CD4-positive, alpha-beta T cell (primary cell): ENCODE measurements at regions of chr6 and their contacts with region 1.

Region 1: DNA sequence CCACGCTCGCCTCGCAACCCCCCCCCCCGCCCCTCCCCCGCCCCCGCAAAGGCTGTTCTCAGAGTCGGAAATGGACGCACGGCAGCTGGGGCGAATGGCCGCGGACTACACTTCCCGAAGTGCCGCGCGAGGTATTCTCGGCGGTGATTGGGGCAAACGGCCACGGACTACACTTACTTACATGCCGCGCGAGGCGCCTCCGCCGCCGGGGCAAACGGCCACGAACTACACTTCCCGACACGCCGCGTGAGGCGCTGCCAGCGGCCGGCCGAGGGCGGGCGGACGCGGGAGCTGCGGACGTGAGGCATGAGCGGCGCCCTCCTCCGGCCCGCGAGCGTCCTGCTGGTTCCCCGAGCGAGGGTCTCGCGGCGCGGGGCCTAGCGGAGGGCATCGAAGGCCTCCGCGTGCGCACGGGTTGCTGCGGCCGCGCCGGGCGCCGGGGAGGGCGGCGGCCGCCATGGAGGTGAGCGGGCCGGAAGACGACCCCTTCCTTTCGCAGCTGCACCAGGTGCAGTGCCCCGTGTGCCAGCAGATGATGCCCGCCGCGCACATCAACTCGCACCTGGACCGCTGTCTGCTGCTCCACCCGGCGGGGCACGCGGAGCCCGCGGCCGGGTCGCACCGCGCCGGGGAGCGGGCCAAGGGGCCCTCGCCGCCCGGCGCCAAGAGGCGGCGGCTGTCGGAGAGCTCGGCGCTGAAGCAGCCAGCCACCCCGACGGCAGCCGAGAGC is at the start of gene WRNIP1:
- DNase-seq: peak; percentile 92 to 99 (median 96)
- ATAC-seq: peak; percentile 83
- H3K4me3 ChIP-seq: peak within 1 kb of the TSS; percentile 78
- H3K4me3 Mint-ChIP-seq: peak within 1 kb of the TSS; percentile 97
- H3K27ac ChIP-seq: peak within 1 kb of the TSS; percentile 80 to 96
- H3K27ac Mint-ChIP-seq: peak within 1 kb of the TSS; percentile 97
- H3K4me1 ChIP-seq: peaks cover 34% of the 10 kb centered on the region
- H3K4me1 Mint-ChIP-seq: peaks cover 61% of the 10 kb centered on the region
- H3K27me3 ChIP-seq: no peaks in the 10 kb centered on the region
- H3K27me3 Mint-ChIP-seq: no peaks in the 10 kb centered on the region
- CTCF ChIP-seq: peak; percentile 44
- total RNA-seq, gene WRNIP1: 22.4 to 25.2 TPM

Region 2: GRCh38 chr6:2245094-2245876 is 520.0 kb before region 1 on chr6 and contains the start of gene GMDS:
- CTCF ChIA-PET with region 1: no interaction called
- POLR2A ChIA-PET with region 1: no interaction called
- intact Hi-C with region 1: loop called in 1 of 2 experiments (anchors 10 kb)
- DNase-seq: peak; percentile 60 to 95 (median 78)
- ATAC-seq: peak; percentile 88
- H3K4me3 ChIP-seq: peak within 1 kb of the TSS; percentile 97
- H3K4me3 Mint-ChIP-seq: peak within 1 kb of the TSS; percentile 94
- H3K27ac ChIP-seq: peak within 1 kb of the TSS; percentile 50 to 88
- H3K27ac Mint-ChIP-seq: peak within 1 kb of the TSS; percentile 96
- H3K4me1 ChIP-seq: peaks cover 29% of the 10 kb centered on the region
- H3K4me1 Mint-ChIP-seq: peaks cover 69% of the 10 kb centered on the region
- H3K27me3 ChIP-seq: no peaks in the 10 kb centered on the region
- H3K27me3 Mint-ChIP-seq: no peaks in the 10 kb centered on the region
- CTCF ChIP-seq: no peak
- total RNA-seq, gene GMDS: 13.9 to 16.4 TPM

Region 3: GRCh38 chr6:2575236-2575635 is 190.1 kb before region 1 on chr6:
- CTCF ChIA-PET with region 1: no interaction called
- POLR2A ChIA-PET with region 1: no interaction called
- intact Hi-C with region 1: no loop called
- DNase-seq: no peak
- ATAC-seq: no peak
- H3K4me3 ChIP-seq: no peak overlapping the region
- H3K4me3 Mint-ChIP-seq: no peak overlapping the region
- H3K27ac ChIP-seq: no peak overlapping the region
- H3K27ac Mint-ChIP-seq: no peak overlapping the region
- H3K4me1 ChIP-seq: no peaks in the 10 kb centered on the region
- H3K4me1 Mint-ChIP-seq: no peaks in the 10 kb centered on the region
- H3K27me3 ChIP-seq: peaks cover 0 to 3% of the 10 kb centered on the region in 2 experiments
- H3K27me3 Mint-ChIP-seq: peaks cover 29% of the 10 kb centered on the region
- CTCF ChIP-seq: no peak

Region 4: DNA sequence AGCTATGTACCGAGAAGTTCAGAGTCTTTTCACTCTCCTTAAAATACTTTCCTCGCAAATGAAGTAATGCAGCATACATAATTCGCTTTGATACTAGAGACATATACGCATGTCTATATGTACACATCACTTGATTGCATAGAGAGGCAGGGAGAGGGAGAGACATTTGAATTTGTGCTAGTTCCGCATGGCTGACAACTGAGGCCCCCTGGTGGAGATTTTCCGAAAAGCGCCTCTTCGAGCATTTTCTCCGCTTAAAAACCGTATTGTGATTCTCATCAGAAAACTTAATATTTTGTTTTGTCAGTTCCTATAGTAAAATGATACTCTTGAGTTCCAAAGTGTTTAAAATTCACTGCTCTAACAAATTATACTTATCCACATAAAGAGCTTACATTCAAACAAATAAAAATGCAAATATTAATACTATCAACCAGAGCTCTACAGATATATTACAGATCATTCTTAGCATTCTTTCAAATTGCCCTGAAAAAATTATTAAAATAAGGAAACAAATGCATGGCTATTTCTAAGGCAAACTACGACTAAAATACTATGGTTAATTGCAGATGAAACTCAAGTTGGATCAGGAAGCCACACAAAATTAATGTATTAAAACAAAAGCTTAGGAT is 15.2 kb before region 1 on chr6:
- CTCF ChIA-PET with region 1: interaction called, 26 read pairs
- POLR2A ChIA-PET with region 1: interaction called, 8 read pairs
- intact Hi-C with region 1: no loop called
- DNase-seq: peak; percentile 47 to 82 (median 62)
- ATAC-seq: peak; percentile 82
- H3K4me3 ChIP-seq: no peak overlapping the region
- H3K4me3 Mint-ChIP-seq: no peak overlapping the region
- H3K27ac ChIP-seq: no peak overlapping the region
- H3K27ac Mint-ChIP-seq: no peak overlapping the region
- H3K4me1 ChIP-seq: no peaks in the 10 kb centered on the region
- H3K4me1 Mint-ChIP-seq: peaks cover 6% of the 10 kb centered on the region
- H3K27me3 ChIP-seq: peaks cover 0 to 7% of the 10 kb centered on the region in 2 experiments
- H3K27me3 Mint-ChIP-seq: peaks cover 29% of the 10 kb centered on the region
- CTCF ChIP-seq: peak; percentile 95

Region 5: GRCh38 chr6:2857580-2858337 is 92.4 kb after region 1 on chr6:
- CTCF ChIA-PET with region 1: no interaction called
- POLR2A ChIA-PET with region 1: interaction called, 14 read pairs
- intact Hi-C with region 1: no loop called
- DNase-seq: peak in 12 of 14 experiments; percentile 31 to 92 (median 58)
- ATAC-seq: peak; percentile 15
- H3K4me3 ChIP-seq: no peak overlapping the region
- H3K4me3 Mint-ChIP-seq: peak overlapping the region; percentile 81
- H3K27ac ChIP-seq: peak overlapping the region; percentile 91 to 94
- H3K27ac Mint-ChIP-seq: peak overlapping the region; percentile 94
- H3K4me1 ChIP-seq: peaks cover 95% of the 10 kb centered on the region
- H3K4me1 Mint-ChIP-seq: peaks cover 91% of the 10 kb centered on the region
- H3K27me3 ChIP-seq: no peaks in the 10 kb centered on the region
- H3K27me3 Mint-ChIP-seq: no peaks in the 10 kb centered on the region
- CTCF ChIP-seq: no peak

Region 6: GRCh38 chr6:3068329-3069214 is 303.2 kb after region 1 on chr6 and contains the start of gene RIPK1:
- CTCF ChIA-PET with region 1: no interaction called
- POLR2A ChIA-PET with region 1: interaction called, 8 read pairs
- intact Hi-C with region 1: loop called in 1 of 2 experiments (anchors 5 kb)
- DNase-seq: peak; percentile 87 to 97 (median 94)
- ATAC-seq: peak; percentile 73
- H3K4me3 ChIP-seq: peak within 1 kb of the TSS; percentile 84
- H3K4me3 Mint-ChIP-seq: peak within 1 kb of the TSS; percentile 99
- H3K27ac ChIP-seq: peak within 1 kb of the TSS; percentile 88 to 94
- H3K27ac Mint-ChIP-seq: peak within 1 kb of the TSS; percentile 99
- H3K4me1 ChIP-seq: peaks cover 44% of the 10 kb centered on the region
- H3K4me1 Mint-ChIP-seq: peaks cover 74% of the 10 kb centered on the region
- H3K27me3 ChIP-seq: no peaks in the 10 kb centered on the region
- H3K27me3 Mint-ChIP-seq: no peaks in the 10 kb centered on the region
- CTCF ChIP-seq: peak; percentile 40
- total RNA-seq, gene RIPK1: 17.2 to 17.3 TPM

Region 7: GRCh38 chr6:3258720-3259490 is 493.6 kb after region 1 on chr6 and contains the start of gene PSMG4:
- CTCF ChIA-PET with region 1: no interaction called
- POLR2A ChIA-PET with region 1: interaction called, 4 read pairs
- intact Hi-C with region 1: loop called in 1 of 2 experiments (anchors 5 kb)
- DNase-seq: peak; percentile 83 to 96 (median 92)
- ATAC-seq: peak; percentile 74
- H3K4me3 ChIP-seq: peak within 1 kb of the TSS; percentile 80
- H3K4me3 Mint-ChIP-seq: peak within 1 kb of the TSS; percentile 96
- H3K27ac ChIP-seq: peak within 1 kb of the TSS in 1 of 2 donors; percentile 50
- H3K27ac Mint-ChIP-seq: peak within 1 kb of the TSS; percentile 92
- H3K4me1 ChIP-seq: peaks cover 45% of the 10 kb centered on the region
- H3K4me1 Mint-ChIP-seq: peaks cover 42% of the 10 kb centered on the region
- H3K27me3 ChIP-seq: no peaks in the 10 kb centered on the region
- H3K27me3 Mint-ChIP-seq: no peaks in the 10 kb centered on the region
- CTCF ChIP-seq: no peak
- total RNA-seq, gene PSMG4: 12.3 to 12.8 TPM

Region 8: GRCh38 chr6:3456755-3457466 is 691.6 kb after region 1 on chr6 and contains the start of gene SLC22A23:
- CTCF ChIA-PET with region 1: no interaction called
- POLR2A ChIA-PET with region 1: no interaction called
- intact Hi-C with region 1: loop called in 1 of 2 experiments (anchors 10 kb)
- DNase-seq: peak; percentile 63 to 91 (median 77)
- ATAC-seq: peak; percentile 52
- H3K4me3 ChIP-seq: peak within 1 kb of the TSS; percentile 72
- H3K4me3 Mint-ChIP-seq: peak within 1 kb of the TSS; percentile 89
- H3K27ac ChIP-seq: no peak within 1 kb of the TSS
- H3K27ac Mint-ChIP-seq: peak within 1 kb of the TSS; percentile 63
- H3K4me1 ChIP-seq: peaks cover 36% of the 10 kb centered on the region
- H3K4me1 Mint-ChIP-seq: peaks cover 7% of the 10 kb centered on the region
- H3K27me3 ChIP-seq: peaks cover 6 to 15% of the 10 kb centered on the region in 2 experiments
- H3K27me3 Mint-ChIP-seq: peaks cover 15% of the 10 kb centered on the region
- CTCF ChIP-seq: peak; percentile 79
- total RNA-seq, gene SLC22A23: 13.4 to 13.6 TPM